ENCODE measurements at regions of chr6 and their contacts with region 1.

Region 1: GRCh38 chr6:26421259-26422144 is 18.8 kb upstream of the BTN3A3 start:
- DNase-seq: peak; percentile 80
- ATAC-seq: peak; percentile 93
- H3K4me3 ChIP-seq: peak overlapping the region; percentile 85 to 97 (median 95)
- H3K4me3 Mint-ChIP-seq: no peak overlapping the region
- H3K27ac ChIP-seq: peak overlapping the region; percentile 57 to 70
- H3K27ac Mint-ChIP-seq: peak overlapping the region; percentile 70
- H3K4me1 ChIP-seq: peaks cover 6 to 14% of the 10 kb centered on the region in 2 donors
- H3K4me1 Mint-ChIP-seq: peaks cover 5% of the 10 kb centered on the region
- H3K27me3 ChIP-seq: no peaks in the 10 kb centered on the region
- H3K27me3 Mint-ChIP-seq: no peaks in the 10 kb centered on the region
- CTCF ChIP-seq: no peak

Region 2: DNA sequence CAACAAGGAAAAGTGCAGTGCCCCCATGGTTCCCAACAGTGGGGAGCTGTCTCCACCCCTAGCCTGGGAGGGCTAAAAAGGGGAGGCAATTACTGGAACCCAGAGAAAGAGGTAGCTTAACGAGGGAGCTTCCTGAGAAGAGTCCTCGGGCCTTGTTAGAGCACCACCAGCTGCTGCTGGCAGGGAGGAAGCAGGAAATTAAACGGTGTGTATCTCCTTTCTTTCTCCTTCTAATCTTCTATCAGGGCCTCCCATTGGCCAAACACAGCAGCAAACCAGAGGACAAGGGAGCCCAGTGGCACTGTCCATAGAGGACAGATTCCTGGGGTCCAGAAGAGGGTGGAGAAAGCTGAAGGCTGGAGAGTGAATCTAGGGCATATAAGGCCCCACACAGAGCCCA is 46.2 kb before region 1 on chr6:
- CTCF ChIA-PET with region 1: interaction called, 4 read pairs
- POLR2A ChIA-PET with region 1: interaction called, 14 read pairs
- intact Hi-C with region 1: no loop called
- DNase-seq: no peak
- ATAC-seq: no peak
- H3K4me3 ChIP-seq: no peak overlapping the region
- H3K4me3 Mint-ChIP-seq: no peak overlapping the region
- H3K27ac ChIP-seq: peak overlapping the region; percentile 53 to 74
- H3K27ac Mint-ChIP-seq: peak overlapping the region; percentile 88
- H3K4me1 ChIP-seq: peaks cover 9 to 11% of the 10 kb centered on the region in 2 donors
- H3K4me1 Mint-ChIP-seq: peaks cover 40% of the 10 kb centered on the region
- H3K27me3 ChIP-seq: no peaks in the 10 kb centered on the region
- H3K27me3 Mint-ChIP-seq: no peaks in the 10 kb centered on the region
- CTCF ChIP-seq: no peak

Region 3: DNA sequence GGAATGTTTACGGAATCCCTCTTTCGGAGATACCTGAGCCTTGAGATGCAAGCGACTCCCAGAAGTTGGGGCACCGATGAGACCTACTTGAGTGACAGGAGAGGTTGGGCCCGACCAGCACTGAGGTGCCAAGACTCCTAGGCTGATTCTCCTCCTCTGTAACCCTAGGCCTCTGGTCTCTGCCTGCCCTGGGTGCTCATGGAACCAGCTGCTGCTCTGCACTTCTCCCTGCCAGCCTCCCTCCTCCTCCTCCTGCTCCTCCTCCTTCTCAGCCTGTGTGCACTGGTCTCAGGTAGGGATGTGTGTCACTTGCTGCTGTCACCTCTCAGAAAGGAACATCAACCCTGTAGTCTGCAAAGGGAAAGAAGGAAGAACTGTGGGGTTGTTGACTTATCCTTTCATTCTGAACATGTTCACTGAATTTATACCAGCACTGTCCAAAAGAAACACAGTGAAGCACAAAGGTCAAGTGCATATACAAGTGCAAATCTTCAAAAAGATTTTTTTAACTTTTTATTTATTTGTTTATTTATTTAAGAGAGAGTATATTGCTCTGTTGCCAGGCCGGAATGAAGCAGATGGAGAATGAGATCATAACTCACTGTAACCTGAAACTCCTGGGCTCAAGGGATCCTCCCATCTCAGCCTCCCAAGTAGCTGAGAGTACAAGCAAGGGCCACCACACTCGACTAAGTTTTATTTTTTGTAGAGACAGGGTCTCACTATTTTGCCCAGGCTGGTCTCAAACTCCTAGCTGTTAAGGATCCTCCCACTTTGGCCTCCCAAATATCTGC is 37.7 kb before region 1 on chr6:
- CTCF ChIA-PET with region 1: no interaction called
- POLR2A ChIA-PET with region 1: no interaction called
- intact Hi-C with region 1: loop called (anchors 1 kb)
- DNase-seq: peak; percentile 54
- ATAC-seq: no peak
- H3K4me3 ChIP-seq: peak overlapping the region; percentile 70 to 97 (median 89)
- H3K4me3 Mint-ChIP-seq: peak overlapping the region; percentile 97
- H3K27ac ChIP-seq: peak overlapping the region; percentile 90 to 98
- H3K27ac Mint-ChIP-seq: peak overlapping the region; percentile 96
- H3K4me1 ChIP-seq: peaks cover 35 to 49% of the 10 kb centered on the region in 2 donors
- H3K4me1 Mint-ChIP-seq: peaks cover 66% of the 10 kb centered on the region
- H3K27me3 ChIP-seq: no peaks in the 10 kb centered on the region
- H3K27me3 Mint-ChIP-seq: no peaks in the 10 kb centered on the region
- CTCF ChIP-seq: no peak

Region 4: DNA sequence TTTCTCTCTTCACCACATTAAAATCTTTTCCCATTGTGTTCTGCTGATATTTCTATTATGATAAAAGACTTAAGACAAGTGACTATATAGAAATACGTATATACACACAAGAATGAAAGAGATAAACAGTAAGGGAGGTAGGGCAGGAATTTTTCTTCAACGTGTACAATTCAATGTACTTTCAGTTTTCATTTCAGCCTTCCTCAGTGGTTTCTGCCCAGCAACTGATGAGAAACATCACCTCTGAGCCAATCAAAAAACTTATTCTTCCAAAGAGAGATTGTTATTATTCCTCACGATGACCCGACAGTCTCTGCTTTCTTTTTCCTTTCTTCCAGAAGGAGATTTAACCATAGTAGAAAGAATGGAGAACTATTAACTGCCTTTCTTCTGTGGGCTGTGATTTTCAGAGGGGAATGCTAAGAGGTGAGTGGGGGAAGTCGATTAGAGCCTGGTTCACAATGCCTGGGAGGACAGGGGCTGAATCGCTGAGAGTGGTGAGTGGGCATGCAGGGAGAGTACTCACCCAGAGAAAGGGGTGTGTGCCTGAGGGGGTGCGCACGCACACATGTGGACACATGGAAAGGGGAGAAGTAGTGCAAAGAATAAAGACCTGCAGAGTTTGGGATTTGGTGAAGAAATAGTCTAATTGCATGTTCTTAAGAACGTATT is 19.4 kb before region 1 on chr6 and contains the start of gene BTN3A1:
- CTCF ChIA-PET with region 1: interaction called, 3 read pairs
- POLR2A ChIA-PET with region 1: interaction called, 4 read pairs
- intact Hi-C with region 1: loop called (anchors 1 kb)
- DNase-seq: peak; percentile 86
- ATAC-seq: peak; percentile 87
- H3K4me3 ChIP-seq: peak within 1 kb of the TSS; percentile 51 to 98 (median 94)
- H3K4me3 Mint-ChIP-seq: peak within 1 kb of the TSS; percentile 98
- H3K27ac ChIP-seq: peak within 1 kb of the TSS; percentile 64 to 84
- H3K27ac Mint-ChIP-seq: peak within 1 kb of the TSS; percentile 97
- H3K4me1 ChIP-seq: peaks cover 43 to 53% of the 10 kb centered on the region in 2 donors
- H3K4me1 Mint-ChIP-seq: peaks cover 63% of the 10 kb centered on the region
- H3K27me3 ChIP-seq: no peaks in the 10 kb centered on the region
- H3K27me3 Mint-ChIP-seq: no peaks in the 10 kb centered on the region
- CTCF ChIP-seq: no peak
- total RNA-seq, gene BTN3A1: 173 and 175 TPM in 2 replicates

Region 5: DNA sequence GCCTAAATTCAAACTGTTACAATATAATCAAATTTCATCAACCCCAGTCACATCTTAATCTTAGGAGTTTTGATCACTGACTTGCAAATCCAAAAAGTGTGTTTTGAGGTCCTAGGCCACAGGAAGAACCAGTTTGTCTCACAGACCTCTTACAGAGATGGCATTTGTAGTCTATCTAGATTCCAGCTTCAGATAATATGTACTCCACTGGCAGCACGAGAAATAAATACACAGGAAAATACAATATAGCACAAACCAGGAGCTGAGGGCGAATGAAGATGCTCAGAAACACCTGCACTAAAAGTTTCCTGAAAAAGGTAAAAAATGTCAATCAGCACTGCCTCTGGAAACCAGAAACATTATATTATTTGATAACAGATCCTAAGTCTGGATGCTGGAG is 18.2 kb after region 1 on chr6:
- CTCF ChIA-PET with region 1: interaction called, 6 read pairs
- POLR2A ChIA-PET with region 1: no interaction called
- intact Hi-C with region 1: loop called (anchors 1 kb)
- DNase-seq: peak; percentile 49
- ATAC-seq: no peak
- H3K4me3 ChIP-seq: peak overlapping the region; percentile 76 to 100 (median 87)
- H3K4me3 Mint-ChIP-seq: peak overlapping the region; percentile 98
- H3K27ac ChIP-seq: peak overlapping the region; percentile 94 to 96
- H3K27ac Mint-ChIP-seq: peak overlapping the region; percentile 90
- H3K4me1 ChIP-seq: peaks cover 19 to 31% of the 10 kb centered on the region in 2 donors
- H3K4me1 Mint-ChIP-seq: peaks cover 38% of the 10 kb centered on the region
- H3K27me3 ChIP-seq: no peaks in the 10 kb centered on the region
- H3K27me3 Mint-ChIP-seq: no peaks in the 10 kb centered on the region
- CTCF ChIP-seq: no peak

Region 6: DNA sequence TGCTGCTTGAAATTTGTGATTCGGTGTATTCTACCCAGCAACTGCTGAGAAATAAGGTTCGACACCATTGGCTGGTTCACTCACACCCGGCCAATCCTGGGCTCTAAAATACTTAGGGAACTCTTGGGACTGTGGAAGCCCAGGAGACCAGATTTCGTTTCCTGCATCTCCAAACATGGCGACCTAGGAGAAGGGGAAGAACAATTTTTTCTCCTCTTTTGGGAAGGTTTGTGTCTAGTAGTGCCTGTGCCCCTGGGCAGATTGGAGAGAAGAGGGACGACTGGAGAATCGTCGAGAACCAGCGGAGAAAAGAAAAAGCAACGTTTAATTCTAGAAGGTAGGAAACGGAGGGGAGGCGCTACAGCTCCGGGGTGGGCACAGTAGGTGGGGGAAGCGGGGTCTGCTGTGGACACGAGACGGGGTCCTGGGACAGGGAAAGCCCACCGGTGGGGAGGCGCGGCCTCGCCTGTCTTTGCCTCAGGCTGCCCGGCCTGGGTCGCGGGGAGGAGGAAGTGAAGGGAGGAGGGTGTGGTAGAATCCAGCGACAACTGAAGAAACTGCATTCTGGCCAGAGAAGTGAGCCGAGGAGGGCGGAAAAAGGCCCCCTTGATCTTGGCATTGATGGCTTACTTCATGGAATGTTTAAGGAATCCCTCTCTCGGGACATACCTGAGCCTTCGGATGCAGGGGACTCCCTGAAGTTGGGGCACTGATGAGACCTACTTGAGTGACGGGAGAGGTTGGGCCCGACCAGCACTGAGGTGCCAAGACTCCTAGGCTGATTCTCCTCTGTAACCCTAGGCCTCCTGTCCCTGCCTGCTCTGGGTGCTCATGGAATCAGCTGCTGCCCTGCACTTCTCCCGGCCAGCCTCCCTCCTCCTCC is 36.5 kb after region 1 on chr6 and contains the start of gene BTN2A1:
- CTCF ChIA-PET with region 1: interaction called, 5 read pairs
- POLR2A ChIA-PET with region 1: no interaction called
- intact Hi-C with region 1: loop called (anchors 5 kb)
- DNase-seq: peak; percentile 89
- ATAC-seq: peak; percentile 96
- H3K4me3 ChIP-seq: peak within 1 kb of the TSS; percentile 75 to 96 (median 92)
- H3K4me3 Mint-ChIP-seq: peak within 1 kb of the TSS; percentile 100
- H3K27ac ChIP-seq: peak within 1 kb of the TSS; percentile 77 to 89
- H3K27ac Mint-ChIP-seq: peak within 1 kb of the TSS; percentile 98
- H3K4me1 ChIP-seq: peaks cover 30 to 47% of the 10 kb centered on the region in 2 donors
- H3K4me1 Mint-ChIP-seq: peaks cover 72% of the 10 kb centered on the region
- H3K27me3 ChIP-seq: no peaks in the 10 kb centered on the region
- H3K27me3 Mint-ChIP-seq: no peaks in the 10 kb centered on the region
- CTCF ChIP-seq: no peak
- total RNA-seq, gene BTN2A1: 63.3 and 69.6 TPM in 2 replicates

Measured in B cell (primary cell).